ENCODE measurements at regions of chr5 and their contacts with region 1.

Region 1: GRCh38 chr5:173829817-173830216 is 58.3 kb upstream of the CPEB4 start:
- DNase-seq: no peak
- ATAC-seq: no peak
- H3K4me3 ChIP-seq: no peak overlapping the region
- H3K27ac ChIP-seq: no peak overlapping the region
- H3K4me1 ChIP-seq: peaks cover 18% of the 10 kb centered on the region
- H3K27me3 ChIP-seq: no peaks in the 10 kb centered on the region
- CTCF ChIP-seq: no peak

Region 2: DNA sequence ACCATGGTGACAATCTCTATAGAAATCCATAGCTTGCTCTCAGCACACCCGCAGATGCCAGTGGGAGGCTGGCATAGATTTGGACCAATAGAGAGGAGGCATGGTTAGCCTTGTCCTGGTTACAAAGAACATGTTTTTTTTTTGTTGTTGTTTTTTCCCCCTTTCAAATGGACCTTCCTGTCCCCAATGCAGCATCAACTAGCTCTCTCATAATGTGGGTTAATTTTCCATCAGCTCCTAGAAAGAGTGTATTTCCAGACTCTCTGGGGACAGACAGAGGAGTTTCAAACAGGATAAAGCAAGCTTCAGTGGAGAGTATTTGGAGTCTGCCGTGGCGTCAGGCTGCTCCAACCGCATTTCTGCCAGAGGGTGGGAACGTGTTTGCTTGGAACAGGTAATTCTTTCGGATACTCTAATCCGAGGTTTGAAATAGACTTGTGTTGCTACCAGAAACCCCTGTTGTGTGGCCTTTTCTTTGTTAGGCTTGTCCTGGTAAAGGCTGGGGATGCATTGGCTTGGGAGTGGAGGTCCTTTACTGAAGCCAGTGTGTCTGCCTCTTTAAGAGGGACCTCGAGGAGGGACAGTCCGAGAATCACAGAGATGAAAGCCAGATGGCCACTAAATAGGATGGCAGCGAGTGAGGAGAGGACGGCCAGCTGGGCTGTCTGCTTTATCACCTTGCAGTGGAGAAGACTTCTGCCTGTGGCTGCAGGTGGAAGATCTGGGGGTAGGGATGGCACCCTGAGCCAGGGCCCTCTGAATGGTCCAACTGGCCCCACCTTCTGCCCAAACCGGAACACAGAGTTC is 72.2 kb before region 1 on chr5:
- intact Hi-C with region 1: no loop called
- DNase-seq: no peak
- ATAC-seq: no peak
- H3K4me3 ChIP-seq: no peak overlapping the region
- H3K27ac ChIP-seq: no peak overlapping the region
- H3K4me1 ChIP-seq: peaks cover 55% of the 10 kb centered on the region
- H3K27me3 ChIP-seq: no peaks in the 10 kb centered on the region
- CTCF ChIP-seq: no peak

Region 3: GRCh38 chr5:173781814-173782670 is 47.8 kb before region 1 on chr5:
- intact Hi-C with region 1: no loop called
- DNase-seq: peak; percentile 85 to 92
- ATAC-seq: peak; percentile 92 to 98 (median 95)
- H3K4me3 ChIP-seq: no peak overlapping the region
- H3K27ac ChIP-seq: peak overlapping the region; percentile 72
- H3K4me1 ChIP-seq: peaks cover 24% of the 10 kb centered on the region
- H3K27me3 ChIP-seq: no peaks in the 10 kb centered on the region
- CTCF ChIP-seq: no peak

Region 4: GRCh38 chr5:173795601-173796300 is 34.1 kb before region 1 on chr5:
- intact Hi-C with region 1: loop called in 1 of 2 experiments (anchors 5 kb)
- DNase-seq: no peak
- ATAC-seq: no peak
- H3K4me3 ChIP-seq: no peak overlapping the region
- H3K27ac ChIP-seq: no peak overlapping the region
- H3K4me1 ChIP-seq: no peaks in the 10 kb centered on the region
- H3K27me3 ChIP-seq: no peaks in the 10 kb centered on the region
- CTCF ChIP-seq: no peak

Region 5: DNA sequence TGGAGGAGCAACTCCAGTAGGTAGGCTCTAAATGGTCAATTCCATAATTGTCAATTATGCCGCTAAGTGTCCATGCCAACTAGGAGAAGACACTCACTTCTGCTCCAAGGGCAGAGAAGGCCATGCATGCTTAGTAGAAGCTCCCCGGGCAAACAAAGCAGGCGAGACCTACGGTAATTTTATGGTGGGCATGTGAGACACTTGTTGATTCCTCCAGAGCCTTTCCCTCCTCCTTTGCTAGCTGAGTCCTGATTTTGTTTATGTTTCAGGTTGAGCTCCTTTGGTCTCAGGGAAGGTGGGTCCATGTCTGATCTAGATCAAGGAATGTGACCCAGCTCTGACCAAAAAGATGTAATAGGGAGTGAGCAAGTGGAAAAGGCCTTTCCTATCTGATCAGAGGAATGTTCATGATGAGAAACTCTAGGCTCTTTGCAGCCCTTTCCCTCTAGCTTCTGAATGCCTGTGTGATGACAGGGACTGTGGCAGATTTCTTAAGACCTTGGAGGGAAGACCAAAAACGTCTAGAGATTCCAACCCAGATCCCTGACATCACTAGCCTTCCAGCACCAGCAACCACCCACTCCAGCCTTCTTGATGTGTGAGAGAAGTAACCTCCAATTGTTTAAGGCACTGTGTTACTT is 50.6 kb after region 1 on chr5:
- intact Hi-C with region 1: no loop called
- DNase-seq: no peak
- ATAC-seq: no peak
- H3K4me3 ChIP-seq: no peak overlapping the region
- H3K27ac ChIP-seq: no peak overlapping the region
- H3K4me1 ChIP-seq: peaks cover 4% of the 10 kb centered on the region
- H3K27me3 ChIP-seq: no peaks in the 10 kb centered on the region
- CTCF ChIP-seq: no peak

Measured in psoas muscle (tissue), 8 donors.